Activated naive CD4-positive, alpha-beta T cell treated with anti-CD3 and anti-CD28 coated beads, Interleukin-2, amount 10 ng/mL, durations not matched to agents 7 days and 5 days (primary cell): ENCODE measurements at regions of chr10 and their contacts with region 1.

Region 1: DNA sequence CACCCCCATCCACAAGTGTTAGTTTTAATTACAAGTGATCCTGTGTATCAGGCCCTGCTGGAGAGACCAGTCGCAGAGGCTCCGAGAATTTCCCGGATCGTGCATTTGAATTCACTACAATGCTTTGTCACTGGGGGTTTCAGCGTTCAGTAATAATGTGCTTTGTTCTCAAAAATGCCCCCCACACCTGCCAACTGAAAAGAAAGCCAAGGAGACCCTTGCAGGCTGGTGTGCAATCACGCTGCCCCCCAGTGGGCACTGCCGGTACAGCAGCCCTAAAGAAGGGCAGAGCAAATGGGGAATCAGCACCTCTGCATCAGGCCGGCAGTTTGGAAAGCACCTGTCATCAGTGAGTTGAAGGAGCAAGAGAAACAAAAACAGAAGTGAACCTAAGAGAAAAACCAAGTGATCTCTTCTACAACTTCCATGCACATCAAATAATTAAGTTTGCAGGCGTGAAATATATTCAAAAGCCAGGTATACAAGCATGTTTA is 177.6 kb downstream of the PARD3 start:
- DNase-seq: peak; percentile 72
- H3K4me3 Mint-ChIP-seq: no peak overlapping the region
- H3K27ac Mint-ChIP-seq: no peak overlapping the region
- H3K4me1 Mint-ChIP-seq: no peaks in the 10 kb centered on the region
- H3K27me3 Mint-ChIP-seq: peaks cover 3% of the 10 kb centered on the region

Region 2: GRCh38 chr10:33193057-33193700 is 1444.3 kb before region 1 on chr10:
- CTCF ChIA-PET with region 1: interaction called, 13 read pairs
- DNase-seq: peak; percentile 82
- H3K4me3 Mint-ChIP-seq: no peak overlapping the region
- H3K27ac Mint-ChIP-seq: no peak overlapping the region
- H3K4me1 Mint-ChIP-seq: peaks cover 2% of the 10 kb centered on the region
- H3K27me3 Mint-ChIP-seq: peaks cover 4% of the 10 kb centered on the region

Region 3: GRCh38 chr10:33330543-33331378 is 1306.7 kb before region 1 on chr10:
- CTCF ChIA-PET with region 1: interaction called, 12 read pairs
- DNase-seq: peak; percentile 84
- H3K4me3 Mint-ChIP-seq: no peak overlapping the region
- H3K27ac Mint-ChIP-seq: no peak overlapping the region
- H3K4me1 Mint-ChIP-seq: peaks cover 16% of the 10 kb centered on the region
- H3K27me3 Mint-ChIP-seq: peaks cover 49% of the 10 kb centered on the region

Region 4: GRCh38 chr10:34522546-34522945 is 114.9 kb before region 1 on chr10:
- CTCF ChIA-PET with region 1: interaction called, 14 read pairs
- DNase-seq: no peak
- H3K4me3 Mint-ChIP-seq: no peak overlapping the region
- H3K27ac Mint-ChIP-seq: no peak overlapping the region
- H3K4me1 Mint-ChIP-seq: peaks cover 2% of the 10 kb centered on the region
- H3K27me3 Mint-ChIP-seq: no peaks in the 10 kb centered on the region

Region 5: GRCh38 chr10:34555653-34556052 is 81.8 kb before region 1 on chr10:
- CTCF ChIA-PET with region 1: no interaction called
- DNase-seq: no peak
- H3K4me3 Mint-ChIP-seq: no peak overlapping the region
- H3K27ac Mint-ChIP-seq: no peak overlapping the region
- H3K4me1 Mint-ChIP-seq: no peaks in the 10 kb centered on the region
- H3K27me3 Mint-ChIP-seq: no peaks in the 10 kb centered on the region

Region 6: DNA sequence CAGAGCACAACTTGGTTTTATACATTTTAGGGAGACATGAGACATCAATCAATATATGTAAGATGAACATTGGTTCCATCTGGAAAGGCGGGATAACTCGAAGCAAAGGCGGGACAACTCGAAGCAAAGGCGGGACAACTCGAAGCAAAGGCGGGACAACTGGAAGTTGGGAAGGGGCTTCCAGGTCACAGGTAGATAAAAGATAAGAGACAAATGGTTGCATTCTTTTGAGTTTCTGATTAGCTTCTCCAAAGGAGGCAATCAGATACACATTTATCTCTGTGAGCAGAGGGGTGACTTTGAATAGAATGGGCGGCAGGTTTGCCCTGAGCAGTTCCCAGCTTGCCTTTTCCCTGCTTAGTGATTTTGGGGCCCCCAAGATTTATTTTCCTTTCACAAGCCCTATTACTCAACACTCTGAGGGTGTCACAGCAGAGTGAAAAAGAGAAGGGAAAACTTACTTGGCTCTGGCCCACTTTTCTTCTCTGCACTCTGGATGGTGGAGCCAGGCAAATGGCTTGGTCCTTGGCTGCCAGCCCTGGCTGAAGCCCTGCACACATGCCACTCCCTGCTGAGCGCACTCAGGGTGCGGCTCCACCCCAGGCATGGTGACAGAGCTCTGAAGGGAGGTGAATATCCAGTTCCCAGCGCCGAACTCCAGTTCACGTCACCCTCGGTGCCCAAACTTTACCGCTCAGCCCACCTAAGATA is 131.0 kb after region 1 on chr10:
- CTCF ChIA-PET with region 1: no interaction called
- DNase-seq: no peak
- H3K4me3 Mint-ChIP-seq: no peak overlapping the region
- H3K27ac Mint-ChIP-seq: no peak overlapping the region
- H3K4me1 Mint-ChIP-seq: no peaks in the 10 kb centered on the region
- H3K27me3 Mint-ChIP-seq: peaks cover 12% of the 10 kb centered on the region

Region 7: GRCh38 chr10:35136263-35136815 is 498.9 kb after region 1 on chr10:
- CTCF ChIA-PET with region 1: no interaction called
- DNase-seq: no peak
- H3K4me3 Mint-ChIP-seq: no peak overlapping the region
- H3K27ac Mint-ChIP-seq: peak overlapping the region; percentile 86
- H3K4me1 Mint-ChIP-seq: peaks cover 45% of the 10 kb centered on the region
- H3K27me3 Mint-ChIP-seq: no peaks in the 10 kb centered on the region